Dendritic cell treated with granulocyte-macrophage colony-stimulating factor and Interleukin-4, amounts not matched to agents 40 ng/mL and 50 ng/mL, for 4 days (primary cell): ENCODE measurements at regions of chr4 and their contacts with region 1.

Region 1: DNA sequence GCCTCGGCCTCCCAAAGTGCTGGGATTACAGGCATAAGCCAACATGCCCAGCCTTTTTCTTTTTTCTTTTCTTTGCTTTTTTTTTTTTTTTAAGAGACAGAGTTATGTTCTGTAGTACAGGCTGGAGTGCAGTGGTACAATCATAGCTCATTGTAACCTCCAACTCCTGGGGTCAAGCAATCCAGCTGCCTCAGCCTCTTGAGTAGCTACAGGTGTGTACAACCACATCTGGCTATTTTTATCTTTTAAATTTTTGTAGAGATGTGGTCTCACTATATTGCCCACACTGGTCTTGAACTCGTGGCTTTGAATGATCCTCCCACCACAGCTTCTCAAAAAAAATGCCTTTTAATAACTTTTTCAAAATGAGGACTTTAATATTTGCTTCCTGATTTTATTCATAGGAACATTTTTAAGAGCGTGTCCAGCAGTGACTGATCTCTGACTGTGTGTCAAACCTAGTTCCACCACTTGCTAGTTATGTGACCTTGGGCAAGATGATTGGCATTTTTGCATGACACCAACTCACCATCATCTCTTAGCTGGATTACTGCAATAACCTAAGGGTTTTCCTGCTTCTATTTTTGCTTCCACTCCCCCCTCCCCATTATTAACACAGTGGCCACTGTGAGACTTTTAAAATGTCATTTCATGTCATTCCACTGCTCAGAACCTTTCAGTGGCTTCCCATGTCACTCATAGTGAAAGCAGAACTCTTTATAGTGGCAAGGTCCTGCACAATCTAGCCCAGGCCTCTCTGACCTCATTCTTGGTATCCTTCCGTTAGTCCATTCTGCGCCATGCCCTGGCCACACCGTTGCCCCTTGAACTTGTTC is 4.5 kb upstream of the TNIP3 start:
- H3K4me3 Mint-ChIP-seq: no peak overlapping the region
- H3K27ac Mint-ChIP-seq: peak overlapping the region; percentile 68
- H3K4me1 Mint-ChIP-seq: peaks cover 52% of the 10 kb centered on the region
- H3K27me3 Mint-ChIP-seq: peaks cover 3% of the 10 kb centered on the region

Region 2: DNA sequence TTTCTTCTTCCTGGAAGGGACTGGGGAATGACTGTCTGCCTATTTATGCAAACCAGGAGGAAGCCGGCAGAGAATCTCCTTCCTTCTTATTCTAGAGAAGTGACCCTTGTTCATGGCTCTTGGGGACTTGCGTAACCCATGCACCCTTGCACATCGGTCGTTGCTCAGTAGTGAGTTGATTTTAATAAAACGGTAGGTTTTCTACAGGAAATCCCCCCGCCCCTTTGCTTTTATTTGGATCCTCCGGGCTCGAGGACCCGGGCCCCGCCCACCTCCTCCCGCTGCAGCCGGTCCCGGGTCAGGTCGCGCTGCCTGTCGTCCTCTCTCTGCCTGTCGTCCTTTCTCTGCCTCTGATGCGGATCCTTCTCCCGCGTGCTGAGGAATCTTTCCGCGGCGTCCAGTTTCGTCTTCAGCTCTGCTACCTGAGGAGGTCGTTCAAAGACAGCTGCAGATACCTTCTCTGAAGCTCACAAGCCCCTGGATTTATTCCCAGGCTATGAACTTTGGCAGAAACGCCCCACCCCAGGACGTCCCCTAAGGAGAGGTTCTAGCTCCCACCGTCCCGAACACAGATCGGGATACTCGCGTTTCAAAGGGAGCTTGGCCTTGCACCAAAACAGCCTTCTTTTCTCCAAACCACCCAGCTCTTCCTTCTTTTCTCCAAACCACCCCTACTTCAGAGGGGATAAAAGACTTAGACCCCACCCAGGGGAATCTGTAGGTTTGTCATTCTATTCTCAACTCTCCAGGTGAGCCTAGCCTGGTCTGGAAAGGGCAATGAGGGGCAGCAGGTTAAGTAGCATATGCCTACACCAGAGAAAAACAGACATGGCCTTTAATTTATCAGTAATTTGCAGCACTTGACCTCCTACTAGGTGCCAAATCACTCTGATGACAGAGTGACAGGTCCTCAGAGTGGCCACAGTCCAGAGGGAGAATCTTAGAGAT is 11.6 kb before region 1 on chr4:
- intact Hi-C with region 1: loop called (anchors 1 kb)
- H3K4me3 Mint-ChIP-seq: peak overlapping the region; percentile 78
- H3K27ac Mint-ChIP-seq: peak overlapping the region; percentile 76
- H3K4me1 Mint-ChIP-seq: peaks cover 42% of the 10 kb centered on the region
- H3K27me3 Mint-ChIP-seq: peaks cover 1% of the 10 kb centered on the region